ENCODE measurements at regions of chr6 and their contacts with region 1.

Region 1: DNA sequence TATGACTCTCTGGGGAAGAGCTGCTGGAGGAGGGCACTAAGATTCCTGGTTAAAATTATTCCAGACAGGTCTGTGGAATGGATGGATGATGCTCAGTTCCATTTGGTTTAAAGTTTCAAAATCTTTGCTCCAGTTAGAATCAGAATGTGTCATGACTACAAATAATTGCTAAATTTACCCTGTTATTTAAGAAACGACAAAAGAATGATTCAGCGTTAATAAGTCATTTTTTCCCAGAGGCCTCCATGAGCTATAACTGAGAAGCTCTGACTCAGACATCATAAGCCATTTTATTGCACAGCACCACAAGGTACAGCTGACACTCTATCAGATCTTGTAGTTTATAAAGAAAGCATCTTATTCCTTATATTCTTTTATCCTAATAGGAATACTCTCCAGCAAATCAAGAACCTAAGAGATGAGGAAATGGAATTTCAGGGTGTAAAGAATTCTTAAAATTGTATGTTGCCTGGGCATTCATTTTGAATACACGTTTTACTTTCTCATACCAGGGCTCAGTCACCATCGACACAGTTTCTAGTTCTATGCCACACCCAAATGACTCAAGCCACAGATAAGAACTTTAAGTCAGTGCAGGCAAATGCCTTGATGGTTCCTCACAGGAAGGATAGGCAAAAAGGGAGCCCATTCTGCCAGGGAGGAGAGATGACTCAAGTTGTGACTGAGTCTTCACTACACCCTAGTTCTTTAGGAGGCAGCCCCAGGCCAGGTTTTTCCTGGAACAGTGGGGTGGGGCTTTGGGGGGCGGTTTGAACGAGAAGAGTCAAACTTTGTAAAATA is 636.0 kb downstream of the MMUT start:
- DNase-seq: peak; percentile 99
- ATAC-seq: peak; percentile 88
- H3K4me3 ChIP-seq: peak overlapping the region; percentile 55
- H3K27ac ChIP-seq: peak overlapping the region; percentile 99
- H3K4me1 ChIP-seq: peaks cover 45% of the 10 kb centered on the region
- H3K27me3 ChIP-seq: no peaks in the 10 kb centered on the region
- CTCF ChIP-seq: no peak

Region 2: GRCh38 chr6:48584846-48585245 is 242.3 kb before region 1 on chr6:
- CTCF ChIA-PET with region 1: no interaction called
- POLR2A ChIA-PET with region 1: no interaction called
- intact Hi-C with region 1: no loop called
- DNase-seq: no peak
- ATAC-seq: no peak
- H3K4me3 ChIP-seq: no peak overlapping the region
- H3K27ac ChIP-seq: no peak overlapping the region
- H3K4me1 ChIP-seq: no peaks in the 10 kb centered on the region
- H3K27me3 ChIP-seq: no peaks in the 10 kb centered on the region
- CTCF ChIP-seq: no peak

Region 3: DNA sequence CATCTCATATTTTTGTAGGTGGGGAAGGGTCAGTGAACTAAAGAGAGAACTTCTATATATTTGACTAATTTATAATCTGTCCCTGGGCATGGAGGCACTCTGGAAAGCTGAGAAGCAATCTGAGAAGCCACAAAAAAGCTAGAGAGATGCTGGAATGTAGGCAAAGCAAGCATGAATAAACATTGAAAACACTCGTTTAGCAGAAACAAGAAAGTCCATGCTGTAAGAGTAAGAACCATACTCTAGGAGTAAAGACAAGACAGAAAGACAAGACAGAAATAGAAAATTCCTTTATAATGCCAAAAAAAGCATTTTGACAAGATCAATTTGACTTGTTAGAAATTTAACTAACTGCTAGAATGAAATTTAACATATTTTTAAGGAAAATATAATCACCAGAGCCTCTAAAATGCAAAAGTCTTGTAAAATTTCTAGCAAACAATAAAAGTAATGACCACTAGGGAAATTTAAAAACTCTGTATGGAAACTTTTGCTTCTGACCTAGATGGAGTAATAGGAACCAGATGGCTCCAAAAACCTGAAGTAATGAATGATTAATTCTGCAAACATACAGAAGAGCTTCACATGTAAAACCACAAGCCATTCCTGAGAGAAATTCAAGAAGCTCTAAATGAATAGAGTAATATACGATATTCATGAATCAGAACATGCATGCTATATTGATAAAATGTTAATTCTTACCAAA is 90.4 kb before region 1 on chr6:
- CTCF ChIA-PET with region 1: no interaction called
- POLR2A ChIA-PET with region 1: no interaction called
- intact Hi-C with region 1: loop called (anchors 2 kb)
- DNase-seq: peak; percentile 94
- ATAC-seq: peak; percentile 98
- H3K4me3 ChIP-seq: peak overlapping the region; percentile 11; the same call in 1 of the 2 replicates
- H3K27ac ChIP-seq: peak overlapping the region; percentile 88
- H3K4me1 ChIP-seq: peaks cover 33% of the 10 kb centered on the region
- H3K27me3 ChIP-seq: no peaks in the 10 kb centered on the region
- CTCF ChIP-seq: peak; percentile 45; the same call in 1 of the 2 replicates

Region 4: GRCh38 chr6:48859562-48860123 is 32.5 kb after region 1 on chr6:
- CTCF ChIA-PET with region 1: no interaction called
- POLR2A ChIA-PET with region 1: no interaction called
- intact Hi-C with region 1: no loop called
- DNase-seq: no peak
- ATAC-seq: no peak
- H3K4me3 ChIP-seq: no peak overlapping the region
- H3K27ac ChIP-seq: no peak overlapping the region
- H3K4me1 ChIP-seq: no peaks in the 10 kb centered on the region
- H3K27me3 ChIP-seq: no peaks in the 10 kb centered on the region
- CTCF ChIP-seq: no peak

Region 5: DNA sequence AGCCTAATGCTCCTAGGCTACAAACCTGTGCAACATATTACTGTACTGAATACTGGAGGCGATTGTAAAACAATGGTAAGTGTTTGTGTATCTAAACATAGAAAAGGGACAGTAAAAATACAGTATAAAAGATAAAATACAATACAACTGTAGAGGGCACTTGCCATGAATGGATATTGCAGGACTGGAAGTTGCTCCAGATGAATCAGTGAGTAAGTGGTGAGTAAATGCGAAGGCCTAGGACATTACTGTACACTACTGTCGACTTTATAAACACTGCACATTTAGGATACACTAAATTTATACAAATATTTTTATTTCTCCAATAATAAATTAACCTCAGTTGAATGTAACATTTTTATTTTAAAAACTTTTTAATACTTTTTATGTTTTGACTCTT is 150.9 kb after region 1 on chr6:
- CTCF ChIA-PET with region 1: no interaction called
- POLR2A ChIA-PET with region 1: no interaction called
- intact Hi-C with region 1: loop called (anchors 2 kb)
- DNase-seq: peak; percentile 57
- ATAC-seq: peak; percentile 87
- H3K4me3 ChIP-seq: no peak overlapping the region
- H3K27ac ChIP-seq: no peak overlapping the region
- H3K4me1 ChIP-seq: peaks cover 5% of the 10 kb centered on the region
- H3K27me3 ChIP-seq: no peaks in the 10 kb centered on the region
- CTCF ChIP-seq: no peak; the same call in 1 of the 2 replicates

Region 6: GRCh38 chr6:49072146-49072545 is 245.0 kb after region 1 on chr6:
- CTCF ChIA-PET with region 1: no interaction called
- POLR2A ChIA-PET with region 1: no interaction called
- intact Hi-C with region 1: no loop called
- DNase-seq: no peak
- ATAC-seq: no peak
- H3K4me3 ChIP-seq: no peak overlapping the region
- H3K27ac ChIP-seq: no peak overlapping the region
- H3K4me1 ChIP-seq: no peaks in the 10 kb centered on the region
- H3K27me3 ChIP-seq: no peaks in the 10 kb centered on the region
- CTCF ChIP-seq: no peak

Region 7: DNA sequence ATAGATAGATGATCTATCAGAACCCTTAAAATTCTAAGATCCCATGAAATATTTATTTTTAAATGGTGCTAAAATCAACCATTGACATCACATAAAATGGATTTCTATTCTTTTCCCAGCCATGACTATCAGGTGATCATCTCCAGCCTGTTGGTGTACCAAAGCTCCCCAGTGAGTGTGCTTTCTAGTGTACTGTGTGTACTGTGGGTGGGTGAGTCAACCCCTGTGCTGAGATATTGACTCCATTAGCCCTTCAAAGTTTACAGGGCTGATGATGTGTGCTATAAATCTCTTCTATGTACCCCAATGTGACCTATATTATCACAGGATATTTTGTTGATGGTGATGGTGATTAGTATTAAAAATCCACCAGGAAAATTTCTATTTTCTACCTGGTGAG is 291.4 kb after region 1 on chr6:
- CTCF ChIA-PET with region 1: no interaction called
- POLR2A ChIA-PET with region 1: no interaction called
- intact Hi-C with region 1: loop called (anchors 2 kb)
- DNase-seq: peak; percentile 65
- ATAC-seq: peak; percentile 95
- H3K4me3 ChIP-seq: no peak overlapping the region
- H3K27ac ChIP-seq: peak overlapping the region; percentile 22
- H3K4me1 ChIP-seq: peaks cover 34% of the 10 kb centered on the region
- H3K27me3 ChIP-seq: no peaks in the 10 kb centered on the region
- CTCF ChIP-seq: no peak

Region 8: GRCh38 chr6:49333345-49334125 is 506.4 kb after region 1 on chr6:
- CTCF ChIA-PET with region 1: no interaction called
- POLR2A ChIA-PET with region 1: no interaction called
- intact Hi-C with region 1: loop called (anchors 1 kb)
- DNase-seq: peak; percentile 75
- ATAC-seq: peak; percentile 93
- H3K4me3 ChIP-seq: no peak overlapping the region
- H3K27ac ChIP-seq: peak overlapping the region; percentile 66
- H3K4me1 ChIP-seq: 0 out of 2 replicates have a peak, but pooled peaks cover 4% of the 10 kb centered on the region
- H3K27me3 ChIP-seq: no peaks in the 10 kb centered on the region
- CTCF ChIP-seq: no peak

Measured in PC-3 (cell line).